ENCODE measurements at regions of chr7 and their contacts with region 1.

Region 1: GRCh38 chr7:103344453-103345149 is at the start of gene DNAJC2:
- DNase-seq: peak; percentile 90
- H3K4me3 Mint-ChIP-seq: peak within 1 kb of the TSS; percentile 99
- H3K27ac Mint-ChIP-seq: peak within 1 kb of the TSS; percentile 98
- H3K4me1 Mint-ChIP-seq: peaks cover 57% of the 10 kb centered on the region
- H3K27me3 Mint-ChIP-seq: no peaks in the 10 kb centered on the region
- total RNA-seq, gene DNAJC2: 39.8 to 42.1 TPM

Region 2: DNA sequence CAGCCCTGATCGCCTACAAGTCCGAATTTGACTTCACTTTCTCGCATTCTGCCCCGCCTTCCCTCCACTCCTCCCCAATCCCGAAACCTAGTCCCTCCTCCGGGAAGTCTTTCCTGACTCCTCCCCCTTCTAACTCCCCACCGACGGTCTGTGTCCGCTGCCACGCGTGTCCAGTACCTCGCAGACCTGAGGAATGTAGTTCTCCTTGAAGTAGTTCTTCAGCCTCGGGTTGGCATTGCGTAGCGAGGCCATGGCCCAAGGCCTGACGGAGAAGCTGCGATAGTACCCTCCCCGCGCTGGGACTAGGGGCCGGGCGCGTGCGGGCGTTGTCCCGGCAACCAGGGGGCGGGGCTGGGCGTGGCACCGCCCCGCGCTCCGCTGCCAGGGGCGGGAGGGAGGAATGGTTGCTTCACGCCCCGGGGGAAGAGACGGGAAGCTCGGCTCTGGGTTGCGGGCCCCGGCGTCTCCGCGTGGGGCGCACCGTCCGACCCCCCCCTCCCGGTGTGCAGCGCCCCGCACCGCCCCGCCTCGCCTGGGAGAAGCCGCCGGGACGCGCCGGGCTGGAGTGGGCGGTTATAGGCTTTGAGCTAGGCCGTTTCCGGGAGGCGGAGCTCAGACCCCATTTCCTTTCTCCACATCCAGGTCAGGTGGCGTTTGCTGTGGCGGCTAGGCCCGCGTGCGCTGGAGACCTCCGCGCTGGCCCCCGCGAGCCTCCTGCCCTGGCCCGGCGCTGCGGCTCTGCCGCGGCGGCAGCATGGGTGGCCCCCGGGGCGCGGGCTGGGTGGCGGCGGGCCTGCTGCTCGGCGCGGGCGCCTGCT is 269.9 kb before region 1 on chr7 and contains the starts of genes ARMC10 and FBXL13:
- CTCF ChIA-PET with region 1: no interaction called
- intact Hi-C with region 1: loop called (anchors 1 kb)
- DNase-seq: peak; percentile 92
- H3K4me3 Mint-ChIP-seq: peak within 1 kb of the TSS; percentile 91
- H3K27ac Mint-ChIP-seq: peak within 1 kb of the TSS; percentile 90
- H3K4me1 Mint-ChIP-seq: peaks cover 40% of the 10 kb centered on the region
- H3K27me3 Mint-ChIP-seq: no peaks in the 10 kb centered on the region
- total RNA-seq, gene ARMC10: 46.6 to 50.5 TPM
- total RNA-seq, gene FBXL13: 0.54 to 0.74 TPM

Region 3: DNA sequence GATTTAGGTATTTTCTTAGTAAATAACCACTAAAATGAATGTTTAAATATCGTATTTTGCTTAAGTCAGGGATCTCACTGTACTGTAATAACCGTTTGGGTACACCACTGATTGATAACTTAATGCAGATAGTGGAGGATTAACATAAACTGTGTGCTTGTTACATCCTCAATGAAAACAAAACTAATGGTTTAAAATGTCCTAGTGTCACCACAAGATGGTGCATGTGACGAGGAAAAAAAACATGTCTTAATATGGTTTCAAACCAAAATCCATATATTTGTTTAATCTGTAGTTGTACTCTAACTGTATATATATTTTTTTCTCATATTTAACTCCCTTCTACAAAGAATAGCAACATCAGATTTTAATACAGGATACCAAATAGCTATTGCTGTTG is 250.5 kb before region 1 on chr7:
- CTCF ChIA-PET with region 1: no interaction called
- intact Hi-C with region 1: no loop called
- DNase-seq: no peak
- H3K4me3 Mint-ChIP-seq: no peak overlapping the region
- H3K27ac Mint-ChIP-seq: no peak overlapping the region
- H3K4me1 Mint-ChIP-seq: no peaks in the 10 kb centered on the region
- H3K27me3 Mint-ChIP-seq: no peaks in the 10 kb centered on the region

Region 4: DNA sequence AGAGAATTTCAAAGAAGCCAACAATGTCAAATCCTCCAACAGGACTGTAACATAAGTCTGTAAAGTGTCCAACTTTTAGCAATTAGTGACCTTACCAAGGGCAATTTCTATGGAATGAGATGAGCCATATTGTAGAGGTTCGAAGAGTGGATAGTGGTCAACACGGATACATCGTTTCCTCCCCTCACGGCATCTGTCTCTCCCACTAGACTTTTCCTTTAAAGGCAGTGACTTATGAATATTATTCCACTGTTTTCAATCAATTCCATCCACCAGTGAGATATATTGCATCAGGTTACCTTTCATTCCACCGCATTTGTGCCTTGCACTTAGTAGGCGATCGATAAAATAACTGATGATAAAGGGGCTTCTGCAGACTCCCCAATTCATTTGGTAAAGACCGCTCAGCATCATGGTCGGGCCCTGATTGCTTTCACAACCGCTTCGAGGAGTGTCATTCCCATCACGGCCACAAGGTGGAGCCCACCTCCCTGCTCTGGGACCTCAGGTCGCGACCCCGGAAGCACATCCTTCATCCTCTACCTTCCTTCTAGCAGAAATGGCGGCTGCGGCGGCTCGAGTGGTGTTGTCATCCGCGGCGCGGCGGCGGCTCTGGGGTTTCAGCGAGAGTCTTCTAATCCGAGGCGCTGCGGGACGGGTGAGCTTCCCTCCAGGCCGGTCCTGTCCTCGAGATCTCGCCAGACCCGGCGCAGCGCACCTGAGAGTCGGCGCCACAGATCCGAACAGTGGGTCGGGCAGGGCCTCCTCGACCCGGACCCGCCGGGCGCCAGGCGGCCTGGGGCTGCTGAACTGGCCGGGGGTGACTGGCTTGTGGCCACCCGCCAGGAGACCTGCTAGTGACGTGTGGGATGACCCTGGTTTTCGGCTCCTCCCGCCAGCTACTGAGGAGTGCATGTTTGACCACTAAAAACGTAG is 47.4 kb before region 1 on chr7 and contains the start of gene PMPCB:
- CTCF ChIA-PET with region 1: interaction called, 3 read pairs
- intact Hi-C with region 1: loop called (anchors 1 kb)
- DNase-seq: peak; percentile 99
- H3K4me3 Mint-ChIP-seq: peak within 1 kb of the TSS; percentile 75
- H3K27ac Mint-ChIP-seq: peak within 1 kb of the TSS; percentile 65
- H3K4me1 Mint-ChIP-seq: peaks cover 33% of the 10 kb centered on the region
- H3K27me3 Mint-ChIP-seq: no peaks in the 10 kb centered on the region
- total RNA-seq, gene PMPCB: 83.9 to 90.1 TPM

Region 5: GRCh38 chr7:103413407-103413806 is 68.8 kb after region 1 on chr7:
- CTCF ChIA-PET with region 1: no interaction called
- intact Hi-C with region 1: loop called (anchors 5 kb)
- DNase-seq: no peak
- H3K4me3 Mint-ChIP-seq: no peak overlapping the region
- H3K27ac Mint-ChIP-seq: no peak overlapping the region
- H3K4me1 Mint-ChIP-seq: no peaks in the 10 kb centered on the region
- H3K27me3 Mint-ChIP-seq: peaks cover 8% of the 10 kb centered on the region

Measured in activated naive CD4-positive, alpha-beta T cell treated with anti-CD3 and anti-CD28 coated beads for 36 hours (primary cell).